ENCODE measurements at regions of chr2 and their contacts with region 1.

Region 1: GRCh38 chr2:149561309-149561926 is 26.2 kb downstream of the MMADHC start:
- DNase-seq: no peak
- H3K4me3 Mint-ChIP-seq: no peak overlapping the region
- H3K27ac Mint-ChIP-seq: no peak overlapping the region
- H3K4me1 Mint-ChIP-seq: no peaks in the 10 kb centered on the region
- H3K27me3 Mint-ChIP-seq: peaks cover 5% of the 10 kb centered on the region

Region 2: DNA sequence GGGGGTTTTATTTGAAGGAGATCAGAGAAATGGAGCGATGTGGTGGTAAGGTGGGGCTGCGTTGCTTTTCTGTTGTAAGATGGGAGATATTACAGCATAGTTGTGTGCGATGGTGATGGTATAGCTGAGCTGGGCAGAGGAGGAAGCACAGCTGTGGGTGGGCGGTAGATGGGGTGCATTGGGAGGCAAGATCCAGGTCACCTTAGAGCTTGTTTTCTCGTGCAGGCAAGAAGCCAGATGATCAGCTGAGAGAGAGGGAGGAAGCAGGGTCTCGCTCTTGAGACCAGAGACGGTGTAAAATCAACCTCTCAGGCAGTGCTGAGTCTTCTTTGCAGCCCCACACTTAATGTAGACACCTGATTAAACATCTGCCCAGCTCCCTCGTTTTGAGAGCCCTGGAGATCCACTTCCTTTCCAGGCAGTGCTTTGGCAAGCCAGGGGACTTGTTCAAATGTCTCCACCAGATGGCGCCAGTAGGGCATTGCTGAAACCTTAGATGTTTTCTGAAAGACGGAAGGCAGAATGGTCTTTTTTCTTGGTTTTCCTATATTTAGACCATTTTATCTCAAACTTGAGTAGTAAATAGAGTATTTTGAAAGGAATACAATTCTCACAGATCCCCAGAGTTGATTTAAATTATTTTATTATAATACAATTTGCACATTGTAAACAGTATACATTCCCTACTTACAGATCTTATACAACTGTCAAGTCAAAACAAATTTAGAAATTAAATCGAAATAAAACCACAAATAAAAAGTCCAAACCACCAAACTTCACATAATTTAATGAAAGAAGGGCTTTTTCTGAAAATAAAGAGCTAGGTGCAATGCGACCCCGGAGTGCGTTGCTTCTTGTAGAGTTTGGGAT is 544.1 kb before region 1 on chr2:
- intact Hi-C with region 1: loop called (anchors 1 kb)
- DNase-seq: peak; percentile 50
- H3K4me3 Mint-ChIP-seq: no peak overlapping the region
- H3K27ac Mint-ChIP-seq: no peak overlapping the region
- H3K4me1 Mint-ChIP-seq: peaks cover 3% of the 10 kb centered on the region
- H3K27me3 Mint-ChIP-seq: no peaks in the 10 kb centered on the region

Region 3: GRCh38 chr2:149040451-149040850 is 521.0 kb before region 1 on chr2:
- intact Hi-C with region 1: loop called (anchors 1 kb)
- DNase-seq: peak; percentile 28
- H3K4me3 Mint-ChIP-seq: no peak overlapping the region
- H3K27ac Mint-ChIP-seq: no peak overlapping the region
- H3K4me1 Mint-ChIP-seq: no peaks in the 10 kb centered on the region
- H3K27me3 Mint-ChIP-seq: peaks cover 75% of the 10 kb centered on the region

Region 4: DNA sequence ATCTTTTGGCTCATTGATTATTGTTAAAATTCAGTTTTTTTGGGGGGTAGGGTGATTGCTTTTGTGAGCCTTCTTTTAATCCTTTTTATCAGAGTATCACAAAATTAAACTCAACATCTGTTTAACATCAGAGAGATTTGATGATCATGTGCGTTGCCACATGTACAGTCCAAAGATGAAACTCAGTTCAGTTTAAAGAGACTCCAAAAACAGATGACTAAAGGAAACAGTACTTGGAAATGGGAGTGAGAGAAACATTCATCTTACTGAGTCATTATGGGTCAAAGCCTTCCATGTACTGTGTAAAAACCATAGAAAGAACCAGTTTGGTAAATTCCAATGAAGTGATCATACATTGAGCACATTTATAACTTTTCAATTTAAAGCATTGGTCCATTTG is 178.1 kb before region 1 on chr2:
- intact Hi-C with region 1: no loop called
- DNase-seq: no peak
- H3K4me3 Mint-ChIP-seq: no peak overlapping the region
- H3K27ac Mint-ChIP-seq: no peak overlapping the region
- H3K4me1 Mint-ChIP-seq: no peaks in the 10 kb centered on the region
- H3K27me3 Mint-ChIP-seq: peaks cover 2% of the 10 kb centered on the region

Region 5: DNA sequence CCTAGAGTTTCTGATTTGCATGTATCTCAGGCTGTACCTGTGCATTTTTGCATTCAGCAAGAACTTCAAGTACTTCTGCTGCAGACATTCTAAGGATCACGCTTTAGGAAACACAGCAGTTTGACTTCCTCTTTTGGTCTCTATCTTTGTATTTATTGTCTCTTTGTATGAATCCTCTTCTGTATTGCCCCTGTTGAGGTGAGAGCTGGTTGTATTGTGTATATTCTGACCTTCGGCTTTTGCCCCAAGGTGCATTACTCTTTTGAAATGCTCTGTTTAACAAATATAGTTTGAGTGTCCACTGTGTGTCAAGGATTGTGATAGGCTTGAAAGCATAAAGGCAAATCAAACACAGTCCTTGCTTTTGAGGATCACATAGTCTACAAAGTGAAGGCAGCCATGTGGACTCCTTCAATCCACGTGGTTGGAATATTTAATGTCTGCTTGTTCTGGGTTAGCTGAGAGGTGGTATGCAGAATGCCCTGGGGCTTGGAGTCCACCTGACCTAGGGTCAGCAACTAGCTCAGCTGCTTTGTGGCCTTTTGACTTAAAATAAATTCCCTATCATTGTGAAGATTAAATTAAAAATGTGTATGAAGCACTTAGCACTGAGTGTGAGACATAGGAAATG is 123.0 kb before region 1 on chr2:
- intact Hi-C with region 1: loop called (anchors 5 kb)
- DNase-seq: no peak
- H3K4me3 Mint-ChIP-seq: no peak overlapping the region
- H3K27ac Mint-ChIP-seq: no peak overlapping the region
- H3K4me1 Mint-ChIP-seq: no peaks in the 10 kb centered on the region
- H3K27me3 Mint-ChIP-seq: peaks cover 2% of the 10 kb centered on the region

Measured in activated T-helper 2 cell treated with anti-CD3 and anti-CD28 coated beads, Interferon-gamma antibody, Interleukin-2, Interleukin-4, amounts not matched to agents 10 μg/mL and 5 μg/mL and 100 μg/mL, durations not matched to agents 14 hours and 24 hours and 36 hours (primary cell).